Activated naive CD4-positive, alpha-beta T cell treated with anti-CD3 and anti-CD28 coated beads for 36 hours (primary cell): ENCODE measurements at regions of chr21 and their contacts with region 1.

Region 1: GRCh38 chr21:37032877-37033471 is 26.5 kb downstream of the RIPPLY3 start:
- DNase-seq: no peak
- H3K4me3 Mint-ChIP-seq: no peak overlapping the region
- H3K27ac Mint-ChIP-seq: no peak overlapping the region
- H3K4me1 Mint-ChIP-seq: no peaks in the 10 kb centered on the region
- H3K27me3 Mint-ChIP-seq: peaks cover 3% of the 10 kb centered on the region

Region 2: GRCh38 chr21:37224861-37225839 is 192.2 kb after region 1 on chr21:
- CTCF ChIA-PET with region 1: no interaction called
- intact Hi-C with region 1: no loop called
- DNase-seq: peak; percentile 74
- H3K4me3 Mint-ChIP-seq: peak overlapping the region; percentile 59
- H3K27ac Mint-ChIP-seq: peak overlapping the region; percentile 75
- H3K4me1 Mint-ChIP-seq: peaks cover 48% of the 10 kb centered on the region
- H3K27me3 Mint-ChIP-seq: no peaks in the 10 kb centered on the region

Region 3: GRCh38 chr21:38126669-38127303 is 1093.8 kb after region 1 on chr21:
- CTCF ChIA-PET with region 1: no interaction called
- intact Hi-C with region 1: loop called (anchors 5 kb)
- DNase-seq: peak; percentile 72
- H3K4me3 Mint-ChIP-seq: no peak overlapping the region
- H3K27ac Mint-ChIP-seq: no peak overlapping the region
- H3K4me1 Mint-ChIP-seq: no peaks in the 10 kb centered on the region
- H3K27me3 Mint-ChIP-seq: peaks cover 10% of the 10 kb centered on the region